Activated B cell treated with CpG ODN at 0.5 μM for 24 hours (primary cell): ENCODE measurements at regions of chr1 and their contacts with region 1.

Region 1: GRCh38 chr1:13748610-13749505 is 48.9 kb downstream of the PRDM2 start:
- DNase-seq: peak; percentile 96
- ATAC-seq: peak; percentile 88
- H3K4me3 Mint-ChIP-seq: peak overlapping the region; percentile 85
- H3K27ac Mint-ChIP-seq: peak overlapping the region; percentile 94
- H3K4me1 Mint-ChIP-seq: peaks cover 55% of the 10 kb centered on the region
- H3K27me3 Mint-ChIP-seq: no peaks in the 10 kb centered on the region
- CTCF ChIP-seq: no peak

Region 2: GRCh38 chr1:13667691-13668090 is 81.2 kb before region 1 on chr1:
- CTCF ChIA-PET with region 1: interaction called, 7 read pairs
- POLR2A ChIA-PET with region 1: interaction called, 21 read pairs
- intact Hi-C with region 1: loop called (anchors 1 kb)
- DNase-seq: no peak
- ATAC-seq: peak; percentile 75
- H3K4me3 Mint-ChIP-seq: peak overlapping the region; percentile 78
- H3K27ac Mint-ChIP-seq: peak overlapping the region; percentile 95
- H3K4me1 Mint-ChIP-seq: peaks cover 48% of the 10 kb centered on the region
- H3K27me3 Mint-ChIP-seq: no peaks in the 10 kb centered on the region
- CTCF ChIP-seq: no peak

Region 3: GRCh38 chr1:13759088-13759487 is 10.2 kb after region 1 on chr1:
- CTCF ChIA-PET with region 1: interaction called, 3 read pairs
- POLR2A ChIA-PET with region 1: interaction called, 17 read pairs
- intact Hi-C with region 1: loop called (anchors 2 kb)
- DNase-seq: no peak
- ATAC-seq: no peak
- H3K4me3 Mint-ChIP-seq: no peak overlapping the region
- H3K27ac Mint-ChIP-seq: no peak overlapping the region
- H3K4me1 Mint-ChIP-seq: peaks cover 90% of the 10 kb centered on the region
- H3K27me3 Mint-ChIP-seq: no peaks in the 10 kb centered on the region
- CTCF ChIP-seq: no peak

Region 4: DNA sequence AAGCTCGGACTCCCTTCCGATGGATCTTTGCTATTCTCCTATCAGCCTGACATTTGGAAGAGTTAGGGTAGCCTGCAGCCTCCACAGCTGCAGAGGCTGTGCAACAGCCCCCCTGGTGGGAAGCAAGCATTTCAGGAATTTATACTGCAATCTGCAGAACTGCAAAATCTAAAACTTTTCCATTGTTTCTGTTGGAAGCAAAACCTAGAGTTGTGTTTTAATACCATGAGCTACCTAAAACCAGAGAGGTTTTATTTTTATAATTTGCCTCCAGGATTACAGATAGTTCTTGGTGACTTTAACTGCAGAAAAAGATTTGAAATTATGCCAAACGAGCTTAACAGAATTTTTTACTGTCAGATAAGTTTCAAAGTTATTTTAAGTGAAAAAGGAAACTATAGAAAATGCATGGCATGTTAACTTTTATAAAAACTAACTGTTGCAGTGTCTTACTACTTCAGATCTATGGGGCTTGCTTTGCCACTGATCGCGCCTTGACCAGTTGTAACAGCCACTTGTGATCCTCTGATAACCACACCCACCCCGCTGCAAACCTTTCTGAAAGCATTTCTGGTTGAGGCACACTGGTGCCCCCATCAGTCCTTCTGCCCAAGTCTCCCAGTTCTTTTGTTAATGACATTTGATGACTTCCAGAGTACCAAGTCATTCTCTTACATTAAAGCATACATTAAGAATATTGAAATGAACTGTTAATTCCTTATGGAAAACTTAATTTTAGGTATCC is 15.9 kb after region 1 on chr1:
- CTCF ChIA-PET with region 1: no interaction called
- POLR2A ChIA-PET with region 1: no interaction called
- intact Hi-C with region 1: loop called (anchors 2 kb)
- DNase-seq: no peak
- ATAC-seq: peak; percentile 42
- H3K4me3 Mint-ChIP-seq: no peak overlapping the region
- H3K27ac Mint-ChIP-seq: peak overlapping the region; percentile 53
- H3K4me1 Mint-ChIP-seq: peaks cover 88% of the 10 kb centered on the region
- H3K27me3 Mint-ChIP-seq: no peaks in the 10 kb centered on the region
- CTCF ChIP-seq: no peak